Activated T-helper 2 cell treated with anti-CD3 and anti-CD28 coated beads, Interferon-gamma antibody, Interleukin-2, Interleukin-4, amounts not matched to agents 10 μg/mL and 5 μg/mL and 100 μg/mL, durations not matched to agents 14 hours and 24 hours and 36 hours (primary cell): ENCODE measurements at regions of chr4 and their contacts with region 1.

Region 1: DNA sequence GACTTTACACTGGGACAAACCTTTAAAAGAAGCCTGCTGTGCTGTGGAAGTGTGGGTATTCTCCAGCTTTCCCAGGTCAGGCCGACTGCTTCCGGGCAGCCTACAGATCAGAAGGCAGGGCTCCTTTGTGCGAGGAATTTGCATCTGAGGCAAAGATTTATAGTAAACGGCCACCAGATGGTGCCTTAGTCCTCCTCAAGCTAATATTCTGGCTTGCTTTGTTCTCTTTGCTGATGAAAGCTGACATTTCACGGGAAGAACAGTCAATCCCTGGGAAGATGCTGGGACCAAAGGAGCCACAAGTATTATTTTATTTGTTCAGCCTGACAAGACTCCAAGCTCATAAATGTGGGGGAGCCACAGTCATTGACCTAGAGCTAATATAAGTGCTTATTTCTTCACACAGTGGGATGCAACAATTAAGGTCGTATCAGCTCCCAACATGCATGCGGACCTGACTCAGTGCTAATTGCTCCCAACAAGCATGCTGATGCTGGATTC is 120.7 kb upstream of the TRIM2 start:
- DNase-seq: peak; percentile 23
- H3K4me3 Mint-ChIP-seq: no peak overlapping the region
- H3K27ac Mint-ChIP-seq: no peak overlapping the region
- H3K4me1 Mint-ChIP-seq: peaks cover 15% of the 10 kb centered on the region
- H3K27me3 Mint-ChIP-seq: peaks cover 51% of the 10 kb centered on the region

Region 2: GRCh38 chr4:152850377-152850776 is 233.1 kb before region 1 on chr4:
- intact Hi-C with region 1: loop called (anchors 1 kb)
- DNase-seq: no peak
- H3K4me3 Mint-ChIP-seq: no peak overlapping the region
- H3K27ac Mint-ChIP-seq: no peak overlapping the region
- H3K4me1 Mint-ChIP-seq: peaks cover 13% of the 10 kb centered on the region
- H3K27me3 Mint-ChIP-seq: no peaks in the 10 kb centered on the region

Region 3: GRCh38 chr4:153127760-153128494 is 44.4 kb after region 1 on chr4:
- intact Hi-C with region 1: loop called (anchors 1 kb)
- DNase-seq: peak; percentile 70
- H3K4me3 Mint-ChIP-seq: no peak overlapping the region
- H3K27ac Mint-ChIP-seq: no peak overlapping the region
- H3K4me1 Mint-ChIP-seq: peaks cover 2% of the 10 kb centered on the region
- H3K27me3 Mint-ChIP-seq: peaks cover 30% of the 10 kb centered on the region